Left ventricle myocardium superior (tissue), 1 donor: ENCODE measurements at regions of chr21 and their contacts with region 1.

Region 1: GRCh38 chr21:45378258-45378966 is 26.6 kb upstream of the COL18A1 start:
- DNase-seq: peak; percentile 18
- ATAC-seq: no peak

Region 2: DNA sequence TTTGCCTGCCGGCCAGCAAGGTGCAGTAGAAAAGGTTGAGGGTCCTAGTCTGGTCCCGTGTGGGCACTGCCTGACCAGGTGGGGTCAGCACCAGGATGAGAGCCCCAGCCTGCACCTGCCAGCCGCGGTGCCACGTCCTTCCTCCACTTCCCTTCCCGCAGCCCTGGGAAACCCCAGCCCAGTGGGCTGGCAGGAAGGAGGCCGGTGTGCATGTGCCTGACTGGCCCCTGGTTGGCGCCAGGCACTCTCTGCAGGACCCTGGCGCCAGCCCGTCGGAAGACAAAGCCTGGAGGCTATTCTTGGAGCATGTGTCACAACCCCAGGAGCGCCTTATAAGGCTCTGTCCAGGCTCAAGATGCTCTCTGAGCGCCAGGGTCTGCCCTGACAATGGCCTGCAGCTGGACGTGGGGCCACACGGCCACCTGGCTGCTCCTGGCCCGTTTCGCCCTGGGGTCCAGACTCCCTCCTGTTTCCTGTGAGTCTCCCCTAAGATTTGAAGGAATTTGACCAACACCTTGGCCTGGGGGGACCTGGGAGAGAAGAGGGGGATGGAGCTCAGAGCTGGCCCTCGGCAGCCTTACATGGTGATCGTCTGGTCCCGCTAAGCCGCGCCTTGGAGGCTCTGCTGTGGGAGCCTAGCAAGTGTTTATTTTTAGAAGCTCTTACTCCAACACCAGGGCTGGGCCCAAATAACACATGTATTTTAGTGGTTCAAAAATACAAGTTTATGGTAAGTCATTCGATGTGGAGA is 58.8 kb before region 1 on chr21:
- intact Hi-C with region 1: loop called (anchors 10 kb)
- DNase-seq: peak; percentile 66
- ATAC-seq: peak; percentile 75